ENCODE measurements at regions of chr18 and their contacts with region 1.

Region 1: GRCh38 chr18:35343936-35344735 is at the start of gene ZNF24:
- DNase-seq: peak; percentile 96
- ATAC-seq: peak; percentile 93
- H3K4me3 Mint-ChIP-seq: peak within 1 kb of the TSS; percentile 86
- H3K27ac Mint-ChIP-seq: peak within 1 kb of the TSS; percentile 94
- H3K4me1 Mint-ChIP-seq: peaks cover 38% of the 10 kb centered on the region
- H3K27me3 Mint-ChIP-seq: no peaks in the 10 kb centered on the region
- total RNA-seq, gene ZNF24: 31.7 to 50.9 TPM

Region 2: GRCh38 chr18:34189656-34190435 is 1154.3 kb before region 1 on chr18:
- CTCF ChIA-PET with region 1: no interaction called
- POLR2A ChIA-PET with region 1: no interaction called
- intact Hi-C with region 1: no loop called
- DNase-seq: no peak
- ATAC-seq: no peak
- H3K4me3 Mint-ChIP-seq: no peak overlapping the region
- H3K27ac Mint-ChIP-seq: no peak overlapping the region
- H3K4me1 Mint-ChIP-seq: no peaks in the 10 kb centered on the region
- H3K27me3 Mint-ChIP-seq: no peaks in the 10 kb centered on the region

Region 3: DNA sequence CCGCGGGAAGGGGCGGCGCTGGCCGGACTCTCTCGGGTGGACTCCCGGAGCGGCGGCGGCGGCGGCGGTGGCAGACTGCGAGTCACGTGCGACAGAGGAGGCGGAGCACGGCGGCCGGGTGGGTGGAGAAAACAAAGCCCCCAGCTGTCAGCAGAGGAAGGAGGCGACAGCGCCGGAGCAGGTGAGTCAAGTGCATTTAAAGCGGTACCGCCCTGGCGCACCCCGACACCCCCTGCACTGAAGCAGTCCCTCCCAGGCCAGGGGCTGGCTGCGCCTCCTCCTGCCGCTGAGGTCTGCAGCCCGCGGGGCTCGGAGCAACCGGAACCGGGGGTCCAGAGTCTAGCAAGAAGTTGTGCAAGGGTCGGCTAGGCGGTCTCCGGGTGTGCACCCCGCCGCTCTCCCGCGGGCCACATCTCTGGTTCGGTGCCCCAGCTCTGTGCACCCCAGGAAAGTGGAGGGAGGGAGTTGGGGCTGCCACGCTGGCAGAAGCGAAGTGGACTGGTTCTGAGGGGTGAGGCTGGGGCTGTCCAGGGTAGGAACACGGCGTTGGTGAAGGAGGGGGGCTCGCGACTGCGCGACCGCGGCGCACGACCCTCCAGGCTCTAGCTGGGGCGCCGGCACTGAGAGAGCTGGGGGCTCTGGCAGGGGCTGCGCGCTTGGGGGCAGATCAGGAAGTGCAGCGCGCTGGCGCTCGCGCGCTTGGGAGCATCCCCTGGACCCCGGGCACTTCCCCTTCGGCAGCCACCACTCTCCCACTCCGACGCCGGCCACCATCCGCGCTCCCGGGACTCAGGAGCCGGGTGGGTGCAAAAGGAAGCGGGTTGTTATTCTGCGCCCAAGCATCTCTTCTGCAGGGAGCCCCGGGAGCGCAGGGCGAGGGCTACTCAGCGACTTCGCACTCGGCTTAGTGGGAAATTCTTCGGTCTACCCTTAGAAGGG is 367.0 kb before region 1 on chr18:
- CTCF ChIA-PET with region 1: no interaction called
- POLR2A ChIA-PET with region 1: no interaction called
- intact Hi-C with region 1: loop called in 1 of 2 experiments (anchors 2 kb)
- DNase-seq: peak; percentile 85
- ATAC-seq: peak; percentile 55
- H3K4me3 Mint-ChIP-seq: peak overlapping the region; percentile 73
- H3K27ac Mint-ChIP-seq: no peak overlapping the region
- H3K4me1 Mint-ChIP-seq: peaks cover 23% of the 10 kb centered on the region
- H3K27me3 Mint-ChIP-seq: peaks cover 32% of the 10 kb centered on the region

Region 4: DNA sequence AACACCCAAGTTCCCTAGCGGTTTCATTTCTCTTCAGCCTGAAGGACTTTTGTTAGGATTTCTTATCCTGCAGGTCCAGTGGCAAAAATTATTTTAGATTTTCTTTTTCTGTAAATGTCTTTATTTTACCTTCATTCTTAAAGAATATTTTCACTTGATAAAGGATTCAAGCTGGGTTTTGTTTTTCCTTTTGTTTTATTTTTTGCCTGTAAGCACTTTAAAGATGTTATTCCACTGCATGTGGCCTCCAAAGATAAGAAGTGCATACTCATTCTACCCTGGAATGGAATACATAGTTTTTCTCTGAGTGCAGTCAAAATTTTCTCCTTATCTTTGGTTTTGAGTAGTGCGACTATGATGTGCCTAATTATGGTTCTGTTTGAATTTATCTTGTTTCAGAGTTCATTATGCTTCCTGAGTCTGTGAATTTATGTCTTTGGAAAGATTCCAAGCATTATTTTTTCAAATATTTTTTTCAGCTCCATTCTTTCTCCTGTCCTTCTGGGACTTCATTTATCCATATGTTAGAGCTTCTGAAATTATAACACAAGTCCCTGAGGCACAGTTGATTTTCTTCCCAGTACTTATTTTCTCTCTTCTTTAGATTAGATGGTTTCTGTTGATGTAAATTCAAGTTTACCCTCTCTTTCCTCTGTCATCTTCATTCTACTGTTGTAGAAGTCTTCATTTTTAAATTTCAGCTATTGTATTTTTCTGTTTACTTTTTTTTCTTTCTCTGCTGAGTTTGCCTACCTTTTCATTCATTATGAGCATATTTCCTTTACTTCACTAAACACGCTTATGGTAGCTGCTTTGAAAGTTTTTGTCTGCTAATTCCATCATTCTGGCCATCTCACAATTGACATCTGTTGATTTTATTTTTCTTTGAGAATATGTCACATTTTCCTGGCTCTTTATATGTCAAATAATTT is 233.3 kb before region 1 on chr18:
- CTCF ChIA-PET with region 1: no interaction called
- POLR2A ChIA-PET with region 1: no interaction called
- intact Hi-C with region 1: no loop called
- DNase-seq: no peak
- ATAC-seq: no peak
- H3K4me3 Mint-ChIP-seq: no peak overlapping the region
- H3K27ac Mint-ChIP-seq: peak overlapping the region; percentile 37
- H3K4me1 Mint-ChIP-seq: peaks cover 54% of the 10 kb centered on the region
- H3K27me3 Mint-ChIP-seq: no peaks in the 10 kb centered on the region

Region 5: DNA sequence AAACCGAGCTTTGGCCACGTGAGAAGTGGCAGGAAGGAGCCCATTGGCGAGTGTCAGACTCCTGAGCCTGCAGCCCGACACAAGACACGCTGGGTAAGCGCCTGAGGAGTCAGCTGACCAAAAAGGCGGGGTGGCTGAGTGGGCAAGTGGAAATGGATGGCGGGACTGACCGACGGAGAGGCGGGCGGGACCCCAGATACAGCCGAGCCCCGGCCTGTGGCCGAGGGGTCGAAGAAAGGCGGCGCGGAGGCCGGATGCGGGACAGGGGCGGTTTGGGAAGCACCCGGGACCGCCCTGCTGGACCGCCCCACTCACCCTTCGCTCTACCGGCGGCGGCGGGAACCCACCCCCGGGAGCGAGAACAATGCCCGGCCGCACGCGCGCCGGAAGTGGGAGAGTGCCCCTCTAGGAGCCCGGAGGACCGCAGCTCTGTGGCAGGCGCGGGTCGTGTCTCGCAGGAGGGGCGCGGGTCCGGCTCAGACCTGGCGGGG is 76.9 kb before region 1 on chr18:
- CTCF ChIA-PET with region 1: no interaction called
- POLR2A ChIA-PET with region 1: no interaction called
- intact Hi-C with region 1: loop called in 1 of 2 experiments (anchors 1 kb)
- DNase-seq: peak; percentile 76
- ATAC-seq: peak; percentile 82
- H3K4me3 Mint-ChIP-seq: peak overlapping the region; percentile 80
- H3K27ac Mint-ChIP-seq: peak overlapping the region; percentile 91
- H3K4me1 Mint-ChIP-seq: peaks cover 21% of the 10 kb centered on the region
- H3K27me3 Mint-ChIP-seq: no peaks in the 10 kb centered on the region

Region 6: GRCh38 chr18:35296060-35296459 is 48.1 kb before region 1 on chr18:
- CTCF ChIA-PET with region 1: no interaction called
- POLR2A ChIA-PET with region 1: no interaction called
- intact Hi-C with region 1: no loop called
- DNase-seq: no peak
- ATAC-seq: no peak
- H3K4me3 Mint-ChIP-seq: no peak overlapping the region
- H3K27ac Mint-ChIP-seq: no peak overlapping the region
- H3K4me1 Mint-ChIP-seq: peaks cover 19% of the 10 kb centered on the region
- H3K27me3 Mint-ChIP-seq: no peaks in the 10 kb centered on the region

Region 7: DNA sequence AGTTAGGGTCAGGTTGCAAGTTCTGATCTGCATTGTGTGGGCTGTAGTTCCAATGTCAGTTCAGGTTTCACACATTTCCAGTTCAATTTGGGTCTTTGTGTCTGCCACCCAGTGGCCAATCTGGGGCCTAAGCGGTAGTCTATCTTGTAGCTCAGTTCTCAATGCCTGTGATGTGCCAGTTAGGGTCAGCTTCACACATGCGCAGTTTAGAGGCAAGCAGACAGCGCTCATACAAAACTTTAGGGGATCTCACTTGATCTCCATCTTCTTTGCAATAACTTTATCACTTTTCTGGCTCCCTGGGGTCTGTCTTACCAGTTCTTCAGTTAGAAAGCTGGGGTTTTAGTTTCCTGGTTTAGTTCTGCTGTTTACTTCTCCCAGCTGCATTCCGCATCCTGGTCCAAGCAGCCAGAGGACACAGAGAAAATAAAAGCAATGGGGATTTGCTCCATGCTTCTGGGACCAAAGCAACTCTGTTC is 11.0 kb after region 1 on chr18:
- CTCF ChIA-PET with region 1: interaction called, 14 read pairs
- POLR2A ChIA-PET with region 1: no interaction called
- intact Hi-C with region 1: no loop called
- DNase-seq: peak; percentile 73
- ATAC-seq: peak; percentile 99
- H3K4me3 Mint-ChIP-seq: no peak overlapping the region
- H3K27ac Mint-ChIP-seq: no peak overlapping the region
- H3K4me1 Mint-ChIP-seq: peaks cover 3% of the 10 kb centered on the region
- H3K27me3 Mint-ChIP-seq: no peaks in the 10 kb centered on the region

Region 8: DNA sequence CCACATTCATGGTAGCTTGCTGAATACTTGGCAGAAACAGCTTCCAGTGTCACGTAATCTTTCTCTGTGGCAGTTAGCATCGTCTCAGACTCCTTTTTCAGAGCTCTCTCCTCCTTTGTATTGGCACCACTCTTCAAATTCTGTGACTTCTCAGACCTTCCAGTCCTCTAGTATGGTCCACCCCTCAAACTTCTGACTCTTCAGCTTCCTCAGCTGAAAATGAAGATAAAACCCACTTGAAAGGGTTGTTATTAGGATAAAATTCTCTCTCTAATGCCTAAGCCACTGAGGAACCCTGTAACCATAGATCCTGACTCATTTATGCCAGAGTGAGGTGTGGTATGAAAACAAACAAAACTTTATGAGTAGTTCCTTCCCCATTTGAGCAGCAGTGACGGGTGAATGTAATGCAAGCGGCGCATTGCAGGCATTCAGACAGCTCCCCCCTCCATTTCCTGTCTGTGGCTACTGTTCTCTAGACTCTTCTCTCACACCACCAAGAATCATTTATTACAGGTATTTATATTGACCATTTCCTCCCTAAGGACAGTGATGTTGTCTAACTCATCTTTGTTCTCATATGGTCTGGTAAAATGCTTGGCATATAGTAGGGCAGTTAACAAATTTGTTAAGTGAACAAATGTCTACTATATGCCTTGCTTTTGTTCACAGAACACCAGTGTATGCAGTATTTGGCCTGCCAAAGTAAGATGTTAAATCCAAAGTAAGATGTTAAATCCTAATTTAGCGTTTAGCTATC is 272.7 kb after region 1 on chr18:
- CTCF ChIA-PET with region 1: no interaction called
- POLR2A ChIA-PET with region 1: no interaction called
- intact Hi-C with region 1: loop called in 1 of 2 experiments (anchors 1 kb)
- DNase-seq: peak; percentile 81
- ATAC-seq: peak; percentile 94
- H3K4me3 Mint-ChIP-seq: no peak overlapping the region
- H3K27ac Mint-ChIP-seq: no peak overlapping the region
- H3K4me1 Mint-ChIP-seq: peaks cover 16% of the 10 kb centered on the region
- H3K27me3 Mint-ChIP-seq: no peaks in the 10 kb centered on the region

Measured in activated CD4-positive, alpha-beta T cell treated with anti-CD3 and anti-CD28 coated beads for 36 hours (primary cell).